HepG2 (cell line): ENCODE measurements at regions of chr20 and their contacts with region 1.

Region 1: DNA sequence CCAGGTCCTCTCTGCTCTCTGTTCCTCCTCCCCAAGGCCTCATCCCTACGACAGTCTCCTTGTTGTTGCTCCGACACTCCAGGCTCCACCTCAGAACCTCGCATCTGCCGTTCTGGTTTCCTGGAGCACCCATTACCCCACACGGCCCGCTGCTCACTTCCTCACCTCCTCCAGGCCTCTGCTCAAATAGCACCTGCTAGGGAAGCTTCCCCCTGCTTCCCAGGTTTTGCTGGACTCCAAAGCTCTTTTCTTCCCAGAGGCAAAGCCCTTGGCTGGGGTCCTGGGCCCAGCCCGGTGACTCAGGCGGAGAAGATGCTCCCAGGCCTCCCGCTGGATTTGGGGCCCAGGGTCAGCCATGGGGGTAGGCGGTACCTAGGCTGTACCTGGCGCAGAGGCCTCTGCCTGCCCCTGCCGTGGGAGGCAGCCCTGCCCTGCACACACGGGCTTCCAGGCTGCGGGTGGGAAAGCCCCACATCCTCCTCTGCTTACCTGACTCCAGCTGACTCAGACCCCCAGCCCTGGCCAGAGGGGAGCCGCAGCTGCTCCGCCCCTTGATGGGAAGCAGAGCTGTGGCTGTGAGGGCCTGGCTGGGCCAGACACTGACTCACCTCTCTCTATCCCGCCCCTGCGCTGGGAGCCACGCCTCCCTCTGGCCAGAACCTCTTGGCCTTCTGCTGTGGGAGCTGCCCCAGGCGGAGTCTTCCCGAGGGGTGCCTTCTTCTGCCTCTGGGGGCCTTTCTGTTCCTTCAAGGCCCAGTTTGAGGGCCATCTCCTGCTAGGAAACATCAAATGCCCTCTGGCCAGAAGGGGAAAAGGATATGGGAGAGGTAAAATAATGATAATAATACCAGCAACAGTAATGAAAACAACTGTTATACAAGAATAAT is 130.5 kb downstream of the CEBPB start:
- DNase-seq: peak; percentile 85
- ATAC-seq: peak; percentile 95
- H3K4me3 ChIP-seq: peak overlapping the region; percentile 54 to 87 (median 62)
- H3K27ac ChIP-seq: peak overlapping the region; percentile 11
- H3K4me1 ChIP-seq: peaks cover 56% of the 10 kb centered on the region
- H3K27me3 ChIP-seq: no peaks in the 10 kb centered on the region; a peak in 2 of 5 replicates
- CTCF ChIP-seq: peak; percentile 59
- EP300 ChIP-seq: peak; percentile 18 to 47; a peak in 2 of 4 replicates
- POLR2A ChIP-seq: peak; percentile 16 to 86; a peak in 3 of 4 replicates
- RAD21 ChIP-seq: peak; percentile 49; the same call in 1 of the 2 replicates

Region 2: GRCh38 chr20:50115591-50116372 is 205.4 kb before region 1 on chr20:
- CTCF ChIA-PET with region 1: no interaction called
- POLR2A ChIA-PET with region 1: no interaction called
- in situ Hi-C with region 1: no loop called
- intact Hi-C with region 1: no loop called
- DNase-seq: peak; percentile 96
- ATAC-seq: peak; percentile 82
- H3K4me3 ChIP-seq: peak overlapping the region; percentile 65 to 94 (median 78)
- H3K27ac ChIP-seq: peak overlapping the region; percentile 40
- H3K4me1 ChIP-seq: peaks cover 56% of the 10 kb centered on the region
- H3K27me3 ChIP-seq: no peaks in the 10 kb centered on the region; a peak in 1 of 5 replicates
- CTCF ChIP-seq: 0 out of 2 replicates have a peak, but pooled peaks have one; percentile 2
- EP300 ChIP-seq: no peak; a peak in 1 of 4 replicates
- POLR2A ChIP-seq: peak; percentile 57 to 90; a peak in 3 of 4 replicates
- RAD21 ChIP-seq: 0 out of 2 replicates have a peak, but pooled peaks have one; percentile 32

Region 3: DNA sequence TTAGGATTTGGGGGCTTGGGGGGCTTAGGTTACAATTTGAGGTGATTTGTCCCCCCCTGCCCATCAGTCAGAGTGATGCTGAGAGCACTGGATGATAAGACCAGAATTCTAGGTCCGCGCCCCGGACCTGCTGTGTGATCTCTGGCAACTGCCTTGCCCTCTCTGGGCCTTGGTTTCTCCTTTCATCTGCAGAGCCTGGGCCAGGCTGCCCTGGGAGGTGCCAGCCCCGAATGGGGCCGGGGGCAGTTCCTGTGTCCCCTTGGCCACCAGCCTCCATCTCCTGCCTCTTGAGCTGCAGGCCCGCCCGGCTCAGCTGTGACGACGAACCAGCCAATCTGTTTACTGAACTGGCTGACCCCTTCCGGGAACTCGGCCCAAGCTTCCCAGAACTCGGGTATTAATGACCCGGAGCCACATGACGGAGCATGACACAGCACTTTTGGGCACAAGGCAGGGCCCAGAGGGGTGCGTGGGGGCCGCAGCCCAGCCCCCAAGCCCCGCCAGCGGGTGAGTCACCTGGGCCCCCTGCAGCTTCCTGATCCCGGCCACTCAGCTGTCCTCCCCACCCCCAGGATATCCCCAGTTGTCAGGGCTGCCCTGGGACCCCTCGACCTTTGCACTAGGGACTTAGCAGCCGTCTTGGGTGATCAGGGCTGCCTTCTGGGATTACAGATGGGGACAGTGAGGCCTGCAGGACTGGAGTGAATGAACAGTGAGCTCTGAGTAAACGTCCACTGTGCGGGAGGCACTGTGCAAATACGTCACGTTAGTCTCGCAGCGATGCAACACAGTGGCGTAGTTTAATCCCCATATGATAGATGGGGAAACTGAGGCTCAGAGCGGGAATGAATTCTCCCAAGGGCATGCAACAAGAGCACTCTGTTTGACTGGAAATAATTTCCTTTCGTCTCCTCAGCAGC is 28.6 kb before region 1 on chr20:
- CTCF ChIA-PET with region 1: no interaction called
- POLR2A ChIA-PET with region 1: interaction called, 20 read pairs
- in situ Hi-C with region 1: no loop called
- intact Hi-C with region 1: no loop called
- DNase-seq: peak; percentile 97
- ATAC-seq: peak; percentile 69
- H3K4me3 ChIP-seq: peak overlapping the region in 1 of 3 experiments; percentile 39; a peak in 3 of 6 replicates
- H3K27ac ChIP-seq: peak overlapping the region; percentile 77
- H3K4me1 ChIP-seq: peaks cover 68% of the 10 kb centered on the region
- H3K27me3 ChIP-seq: no peaks in the 10 kb centered on the region
- CTCF ChIP-seq: peak; percentile 41
- EP300 ChIP-seq: peak; percentile 96 to 99
- POLR2A ChIP-seq: peak in 1 of 2 experiments; percentile 14; a peak in 2 of 4 replicates
- RAD21 ChIP-seq: peak; percentile 63

Region 4: GRCh38 chr20:50338479-50339391 is 17.6 kb after region 1 on chr20:
- CTCF ChIA-PET with region 1: no interaction called
- POLR2A ChIA-PET with region 1: interaction called, 25 read pairs
- in situ Hi-C with region 1: no loop called
- intact Hi-C with region 1: loop called (anchors 2 kb)
- DNase-seq: peak; percentile 49
- ATAC-seq: peak; percentile 62
- H3K4me3 ChIP-seq: peak overlapping the region; percentile 20 to 39 (median 37); a peak in 5 of 6 replicates
- H3K27ac ChIP-seq: no peak overlapping the region
- H3K4me1 ChIP-seq: peaks cover 54% of the 10 kb centered on the region
- H3K27me3 ChIP-seq: peaks cover 3 to 33% of the 10 kb centered on the region in 2 experiments; a peak in 3 of 5 replicates
- CTCF ChIP-seq: 0 out of 2 replicates have a peak, but pooled peaks have one; percentile 14
- EP300 ChIP-seq: no peak; a peak in 1 of 4 replicates
- POLR2A ChIP-seq: no peak
- RAD21 ChIP-seq: no peak